Activated CD4-positive, alpha-beta T cell treated with anti-CD3 and anti-CD28 coated beads for 36 hours (primary cell): ENCODE measurements at regions of chr20 and their contacts with region 1.

Region 1: GRCh38 chr20:1734269-1734858 is 76.8 kb upstream of the SIRPG start:
- DNase-seq: peak; percentile 48
- ATAC-seq: peak; percentile 90
- H3K4me3 Mint-ChIP-seq: no peak overlapping the region
- H3K27ac Mint-ChIP-seq: peak overlapping the region; percentile 48
- H3K4me1 Mint-ChIP-seq: peaks cover 40% of the 10 kb centered on the region
- H3K27me3 Mint-ChIP-seq: peaks cover 1% of the 10 kb centered on the region

Region 2: DNA sequence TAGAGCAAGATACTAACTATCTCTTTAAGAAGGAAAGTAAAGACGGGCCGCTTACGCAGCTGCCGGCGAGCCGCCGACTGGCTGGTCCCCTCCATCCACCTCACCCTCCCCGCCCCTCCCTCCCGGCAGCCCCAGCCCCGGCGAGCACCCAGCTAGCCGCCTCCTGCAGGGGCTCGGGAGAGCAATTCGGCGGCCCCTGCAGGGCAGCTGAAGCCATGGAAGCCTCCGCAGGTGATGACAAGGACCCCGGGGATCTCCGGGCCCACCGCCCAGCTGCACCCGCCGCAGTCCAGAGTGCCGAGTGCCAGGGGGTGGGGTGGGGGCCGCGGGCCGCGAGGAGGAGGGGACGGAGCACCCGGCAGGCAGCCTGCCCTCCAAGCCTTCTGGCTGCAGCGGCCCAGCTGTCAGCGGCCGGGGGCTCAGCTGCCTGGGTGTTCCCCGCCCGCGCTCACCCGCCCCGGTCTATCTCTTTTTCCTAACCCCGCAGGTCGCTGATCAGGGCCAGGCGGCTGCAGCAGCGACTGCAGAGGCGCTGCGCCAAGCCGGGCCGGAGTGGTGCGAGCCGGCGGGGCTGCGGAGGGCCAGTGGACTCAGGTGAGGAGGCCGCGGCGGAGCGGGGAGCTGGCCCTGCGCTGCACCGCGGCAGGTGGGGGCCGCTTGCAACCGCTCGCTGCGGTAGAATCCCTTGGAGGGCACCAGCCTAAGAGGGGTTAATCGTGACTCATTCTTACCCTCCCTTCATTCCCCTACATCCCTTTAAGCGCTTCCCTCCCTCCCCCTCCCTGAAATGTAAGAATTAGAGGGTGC is 468.0 kb before region 1 on chr20 and contains the start of gene SNPH:
- CTCF ChIA-PET with region 1: no interaction called
- POLR2A ChIA-PET with region 1: no interaction called
- intact Hi-C with region 1: loop called in 1 of 2 experiments (anchors 10 kb)
- DNase-seq: peak; percentile 86
- ATAC-seq: peak; percentile 91
- H3K4me3 Mint-ChIP-seq: peak within 1 kb of the TSS; percentile 78
- H3K27ac Mint-ChIP-seq: peak within 1 kb of the TSS; percentile 66
- H3K4me1 Mint-ChIP-seq: peaks cover 46% of the 10 kb centered on the region
- H3K27me3 Mint-ChIP-seq: no peaks in the 10 kb centered on the region
- total RNA-seq, gene SNPH: 2.5 to 2.9 TPM

Region 3: DNA sequence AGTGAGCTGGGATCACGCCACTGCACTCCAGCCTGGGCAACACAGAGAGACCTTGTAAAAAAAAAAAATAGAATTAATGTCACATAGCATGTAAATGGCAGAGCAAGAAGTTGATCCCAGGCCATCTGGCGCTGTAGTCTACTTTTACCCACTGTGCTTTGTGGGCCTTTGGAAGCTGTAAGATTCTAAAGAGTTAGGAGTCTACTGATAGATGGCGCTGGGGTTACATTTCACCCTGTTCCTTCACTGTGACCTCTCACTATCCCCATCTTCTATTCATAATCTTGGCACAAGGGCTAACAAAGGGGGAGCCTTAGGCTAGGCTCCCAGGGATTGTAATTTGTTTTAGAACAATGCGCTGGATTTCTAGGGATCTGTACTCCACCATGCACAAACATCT is 201.3 kb before region 1 on chr20:
- CTCF ChIA-PET with region 1: interaction called, 6 read pairs
- POLR2A ChIA-PET with region 1: no interaction called
- intact Hi-C with region 1: loop called (anchors 1 to 5 kb)
- DNase-seq: peak; percentile 33
- ATAC-seq: peak; percentile 60
- H3K4me3 Mint-ChIP-seq: no peak overlapping the region
- H3K27ac Mint-ChIP-seq: no peak overlapping the region
- H3K4me1 Mint-ChIP-seq: peaks cover 8% of the 10 kb centered on the region
- H3K27me3 Mint-ChIP-seq: no peaks in the 10 kb centered on the region

Region 4: DNA sequence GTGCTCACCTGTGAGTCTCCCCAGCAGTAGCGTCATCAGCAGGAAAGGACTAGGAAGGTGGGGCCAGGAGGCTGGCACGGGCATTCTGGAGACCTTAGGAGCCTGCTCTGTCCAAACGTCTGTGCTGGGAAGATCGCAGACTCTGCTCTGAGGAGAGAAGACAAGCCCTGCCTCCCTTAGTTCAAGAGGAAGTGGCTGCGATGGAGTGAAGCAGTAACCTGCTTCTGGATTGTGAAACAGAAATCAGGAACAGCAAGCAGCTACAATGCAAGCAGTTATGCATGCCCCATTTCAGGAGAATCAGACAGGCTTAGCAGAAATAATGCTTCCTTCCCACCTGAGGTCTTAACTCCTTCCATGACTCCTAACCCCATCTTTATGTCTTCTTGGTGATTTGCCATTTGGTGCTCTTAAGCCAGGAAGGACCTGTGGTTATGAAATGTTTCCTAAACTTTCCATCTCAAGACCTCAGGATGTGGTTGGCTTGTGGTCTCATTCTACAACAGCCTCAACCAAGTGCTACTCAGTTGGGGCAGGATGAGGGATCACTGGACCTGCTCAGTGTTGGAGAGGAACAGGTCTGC is 114.4 kb before region 1 on chr20 and contains the start of gene SIRPB1:
- CTCF ChIA-PET with region 1: no interaction called
- POLR2A ChIA-PET with region 1: no interaction called
- intact Hi-C with region 1: loop called in 1 of 2 experiments (anchors 2 kb)
- DNase-seq: peak; percentile 27
- ATAC-seq: peak; percentile 50
- H3K4me3 Mint-ChIP-seq: no peak within 1 kb of the TSS
- H3K27ac Mint-ChIP-seq: peak within 1 kb of the TSS; percentile 37
- H3K4me1 Mint-ChIP-seq: peaks cover 61% of the 10 kb centered on the region
- H3K27me3 Mint-ChIP-seq: no peaks in the 10 kb centered on the region
- total RNA-seq, gene SIRPB1: 1.0 to 2.1 TPM

Region 5: DNA sequence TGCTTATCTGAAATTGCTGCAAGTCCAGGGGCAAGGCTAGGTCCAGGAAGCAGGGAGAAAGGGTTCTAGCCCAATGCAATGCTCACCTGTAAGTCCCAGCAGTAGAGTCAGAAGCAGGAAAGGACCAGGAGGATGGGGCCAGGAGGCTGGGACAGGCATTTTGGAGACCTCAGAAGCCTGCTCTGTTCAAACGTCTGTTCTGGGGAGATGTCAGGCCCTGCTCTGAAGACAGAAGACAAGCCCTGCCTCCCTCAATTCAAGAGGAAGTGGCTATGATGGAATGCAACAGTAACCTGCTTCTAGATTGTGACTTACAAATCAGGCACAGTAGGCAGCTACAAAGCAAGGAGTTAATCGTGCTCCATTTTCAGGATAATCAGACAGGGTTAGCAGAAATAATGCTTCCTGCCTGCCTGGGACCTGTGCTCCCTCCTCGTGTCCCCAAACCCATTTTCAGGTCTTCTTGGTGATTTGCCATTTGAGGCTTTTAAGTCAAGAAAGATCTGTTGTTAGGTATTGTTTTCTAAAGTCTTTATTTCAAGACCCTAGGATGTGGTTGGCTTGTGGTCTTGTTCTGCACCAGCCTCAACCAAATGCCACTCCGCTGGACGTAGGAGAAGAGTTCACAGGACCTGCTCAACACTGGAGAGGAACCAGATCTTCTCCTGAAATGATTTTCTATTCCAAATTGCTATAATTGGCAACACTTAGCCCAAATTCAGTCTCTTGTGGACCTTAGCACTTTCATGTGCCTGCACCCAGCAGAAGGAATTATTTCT is 76.6 kb before region 1 on chr20 and contains the start of gene SIRPG:
- CTCF ChIA-PET with region 1: no interaction called
- POLR2A ChIA-PET with region 1: no interaction called
- intact Hi-C with region 1: loop called in 1 of 2 experiments (anchors 5 kb)
- DNase-seq: peak; percentile 59
- ATAC-seq: peak; percentile 54
- H3K4me3 Mint-ChIP-seq: peak within 1 kb of the TSS; percentile 84
- H3K27ac Mint-ChIP-seq: peak within 1 kb of the TSS; percentile 98
- H3K4me1 Mint-ChIP-seq: peaks cover 90% of the 10 kb centered on the region
- H3K27me3 Mint-ChIP-seq: no peaks in the 10 kb centered on the region
- total RNA-seq, gene SIRPG: 34.3 to 48.7 TPM

Region 6: DNA sequence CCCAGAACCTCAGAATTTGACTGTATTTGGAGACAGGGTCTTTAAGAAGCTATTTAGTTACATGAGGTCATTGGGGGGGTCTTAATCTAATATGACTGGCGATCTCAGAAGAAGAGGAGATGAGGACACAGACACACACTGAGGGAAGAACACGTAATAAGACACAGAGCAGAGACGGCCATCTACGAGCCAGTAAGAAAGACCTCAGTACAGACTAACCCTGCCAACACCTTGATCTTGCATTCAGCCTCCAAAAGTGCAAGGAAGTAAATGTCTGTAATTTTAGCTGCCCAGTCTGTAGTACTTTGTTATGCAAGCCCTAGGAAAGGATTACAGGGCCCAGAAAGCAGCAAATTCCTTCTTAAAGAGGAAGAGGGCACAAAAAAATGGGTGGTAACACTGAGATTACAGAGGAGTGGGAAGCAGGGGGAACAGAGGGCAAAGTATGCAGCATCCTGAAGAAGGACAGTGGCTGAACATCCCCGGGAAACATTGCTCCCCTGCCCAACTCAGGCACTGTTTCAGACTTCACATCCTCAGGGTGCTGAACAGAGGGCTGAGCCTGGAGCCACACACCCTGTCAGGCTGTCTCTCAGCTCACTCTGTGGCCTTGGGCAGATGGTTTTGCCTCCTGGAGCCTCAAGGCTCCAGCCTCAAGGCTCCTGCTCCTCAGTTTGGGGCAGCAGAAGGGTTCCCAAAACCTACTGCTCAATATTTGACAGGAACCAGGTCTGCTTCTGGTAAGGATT is 48.9 kb before region 1 on chr20:
- CTCF ChIA-PET with region 1: no interaction called
- POLR2A ChIA-PET with region 1: no interaction called
- intact Hi-C with region 1: loop called in 1 of 2 experiments (anchors 5 kb)
- DNase-seq: peak; percentile 43
- ATAC-seq: peak; percentile 39
- H3K4me3 Mint-ChIP-seq: peak overlapping the region; percentile 71
- H3K27ac Mint-ChIP-seq: peak overlapping the region; percentile 83
- H3K4me1 Mint-ChIP-seq: peaks cover 82% of the 10 kb centered on the region
- H3K27me3 Mint-ChIP-seq: no peaks in the 10 kb centered on the region

Region 7: GRCh38 chr20:1965520-1966351 is 231.4 kb after region 1 on chr20:
- CTCF ChIA-PET with region 1: no interaction called
- POLR2A ChIA-PET with region 1: no interaction called
- intact Hi-C with region 1: no loop called
- DNase-seq: peak; percentile 93
- ATAC-seq: peak; percentile 93
- H3K4me3 Mint-ChIP-seq: peak overlapping the region; percentile 34
- H3K27ac Mint-ChIP-seq: no peak overlapping the region
- H3K4me1 Mint-ChIP-seq: peaks cover 11% of the 10 kb centered on the region
- H3K27me3 Mint-ChIP-seq: peaks cover 20% of the 10 kb centered on the region